Naive thymus-derived CD4-positive, alpha-beta T cell (primary cell): ENCODE measurements at regions of chrX and their contacts with region 1.

Region 1: GRCh38 chrX:136496770-136497598 is at the start of gene HTATSF1:
- DNase-seq: peak; percentile 72 to 92 (median 88)
- ATAC-seq: peak; percentile 89
- H3K4me3 ChIP-seq: peak within 1 kb of the TSS; percentile 69
- H3K4me3 Mint-ChIP-seq: peak within 1 kb of the TSS; percentile 84 to 97 (median 94)
- H3K27ac ChIP-seq: peak within 1 kb of the TSS; percentile 86
- H3K27ac Mint-ChIP-seq: peak within 1 kb of the TSS; percentile 93 to 99 (median 97)
- H3K4me1 ChIP-seq: peaks cover 7 to 10% of the 10 kb centered on the region in 2 donors
- H3K4me1 Mint-ChIP-seq: peaks cover 6 to 24% (median 17%) of the 10 kb centered on the region in 7 donors
- H3K27me3 ChIP-seq: no peaks in the 10 kb centered on the region
- H3K27me3 Mint-ChIP-seq: peaks cover 0 to 5% (median 0%) of the 10 kb centered on the region in 5 donors
- total RNA-seq, gene HTATSF1: 25.9 to 67.2 (median 29.0) TPM

Region 2: GRCh38 chrX:135421537-135421931 is 1075.5 kb before region 1 on chrX:
- CTCF ChIA-PET with region 1: no interaction called
- POLR2A ChIA-PET with region 1: no interaction called
- intact Hi-C with region 1: loop called in 1 of 2 experiments (anchors 2 kb)
- DNase-seq: peak; percentile 75 to 89 (median 83)
- ATAC-seq: peak; percentile 96
- H3K4me3 ChIP-seq: peak overlapping the region; percentile 37
- H3K4me3 Mint-ChIP-seq: peak overlapping the region; percentile 53 to 84 (median 72)
- H3K27ac ChIP-seq: no peak overlapping the region
- H3K27ac Mint-ChIP-seq: peak overlapping the region in 4 of 9 donors; percentile 12 to 68 (median 26)
- H3K4me1 ChIP-seq: no peaks in the 10 kb centered on the region
- H3K4me1 Mint-ChIP-seq: peaks cover 0 to 13% (median 6%) of the 10 kb centered on the region in 7 donors
- H3K27me3 ChIP-seq: no peaks in the 10 kb centered on the region
- H3K27me3 Mint-ChIP-seq: peaks cover 0 to 22% (median 0%) of the 10 kb centered on the region in 5 donors

Region 3: GRCh38 chrX:136039968-136040367 is 457.0 kb before region 1 on chrX:
- CTCF ChIA-PET with region 1: no interaction called
- POLR2A ChIA-PET with region 1: no interaction called
- intact Hi-C with region 1: no loop called
- DNase-seq: no peak
- ATAC-seq: no peak
- H3K4me3 ChIP-seq: no peak overlapping the region
- H3K4me3 Mint-ChIP-seq: no peak overlapping the region
- H3K27ac ChIP-seq: no peak overlapping the region
- H3K27ac Mint-ChIP-seq: peak overlapping the region in 1 of 9 donors; percentile 14
- H3K4me1 ChIP-seq: no peaks in the 10 kb centered on the region
- H3K4me1 Mint-ChIP-seq: no peaks in the 10 kb centered on the region
- H3K27me3 ChIP-seq: no peaks in the 10 kb centered on the region
- H3K27me3 Mint-ChIP-seq: no peaks in the 10 kb centered on the region

Region 4: DNA sequence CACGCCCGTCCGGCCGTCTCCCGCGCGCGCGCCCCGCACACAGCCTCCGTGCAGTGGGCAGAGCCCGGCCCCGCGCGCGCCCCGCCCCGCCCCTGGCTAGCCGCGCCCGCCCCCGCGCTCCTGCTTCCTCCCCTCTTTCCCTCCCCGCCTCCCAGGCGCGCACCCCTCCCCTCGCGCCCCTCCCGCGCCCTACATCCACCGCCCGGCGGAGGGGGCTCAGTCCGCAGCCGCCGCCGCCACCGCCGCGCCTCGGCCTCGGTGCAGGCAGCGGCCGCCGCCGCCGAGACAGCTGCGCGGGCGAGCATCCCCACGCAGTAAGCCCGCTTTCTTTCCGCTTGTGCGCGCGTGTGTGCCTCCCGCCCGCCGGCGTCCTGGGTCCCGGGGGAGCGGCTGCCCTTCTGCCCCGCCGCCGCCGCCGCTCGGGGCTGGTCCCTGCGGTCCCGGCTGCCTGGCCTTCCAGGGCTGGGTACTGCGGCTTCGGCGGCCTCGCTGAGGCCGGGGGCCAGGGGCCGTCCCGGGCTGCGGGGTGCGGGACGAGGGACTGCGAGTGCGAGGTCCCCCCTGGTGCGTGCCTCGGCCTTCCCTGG is 349.6 kb before region 1 on chrX and contains the start of gene FHL1:
- CTCF ChIA-PET with region 1: no interaction called
- POLR2A ChIA-PET with region 1: no interaction called
- intact Hi-C with region 1: loop called in 1 of 2 experiments (anchors 10 kb)
- DNase-seq: peak; percentile 12 to 59 (median 45)
- ATAC-seq: peak; percentile 86
- H3K4me3 ChIP-seq: peak within 1 kb of the TSS; percentile 55
- H3K4me3 Mint-ChIP-seq: peak within 1 kb of the TSS; percentile 82 to 94 (median 89)
- H3K27ac ChIP-seq: peak within 1 kb of the TSS; percentile 56
- H3K27ac Mint-ChIP-seq: peak within 1 kb of the TSS; percentile 73 to 97 (median 91)
- H3K4me1 ChIP-seq: peaks cover 0 to 17% of the 10 kb centered on the region in 2 donors
- H3K4me1 Mint-ChIP-seq: peaks cover 23 to 54% (median 41%) of the 10 kb centered on the region in 7 donors
- H3K27me3 ChIP-seq: no peaks in the 10 kb centered on the region
- H3K27me3 Mint-ChIP-seq: peaks cover 0 to 14% (median 0%) of the 10 kb centered on the region in 5 donors
- total RNA-seq, gene FHL1: 14.9 to 26.4 (median 22.4) TPM

Region 5: DNA sequence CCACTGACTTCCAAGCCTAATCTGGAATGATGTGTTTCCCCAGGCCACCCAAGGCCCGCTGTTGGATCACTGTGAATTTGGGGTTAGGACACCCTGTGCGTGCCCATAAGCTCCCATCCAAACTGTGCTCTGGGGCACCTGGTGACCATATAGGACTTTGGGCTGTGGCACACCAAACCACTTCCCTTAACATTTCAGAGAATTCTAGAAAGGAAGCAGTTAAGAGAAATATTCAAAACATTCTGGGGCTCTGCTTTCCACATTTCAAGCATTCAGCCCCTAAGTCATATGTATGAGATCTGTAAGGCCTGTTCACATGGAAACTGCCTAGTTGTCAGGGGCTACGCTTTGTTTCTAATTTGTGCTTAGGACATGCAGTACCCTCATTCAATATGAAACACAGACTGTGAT is 49.4 kb after region 1 on chrX:
- CTCF ChIA-PET with region 1: no interaction called
- POLR2A ChIA-PET with region 1: no interaction called
- intact Hi-C with region 1: loop called in 1 of 2 experiments (anchors 2 kb)
- DNase-seq: peak in 4 of 9 donors; percentile 3 to 20 (median 14)
- ATAC-seq: peak; percentile 14
- H3K4me3 ChIP-seq: no peak overlapping the region
- H3K4me3 Mint-ChIP-seq: peak overlapping the region in 5 of 10 donors; percentile 14 to 65 (median 36)
- H3K27ac ChIP-seq: peak overlapping the region; percentile 39
- H3K27ac Mint-ChIP-seq: peak overlapping the region; percentile 30 to 91 (median 79)
- H3K4me1 ChIP-seq: peaks cover 11 to 33% of the 10 kb centered on the region in 2 donors
- H3K4me1 Mint-ChIP-seq: peaks cover 7 to 51% (median 43%) of the 10 kb centered on the region in 7 donors
- H3K27me3 ChIP-seq: no peaks in the 10 kb centered on the region
- H3K27me3 Mint-ChIP-seq: no peaks in the 10 kb centered on the region

Region 6: DNA sequence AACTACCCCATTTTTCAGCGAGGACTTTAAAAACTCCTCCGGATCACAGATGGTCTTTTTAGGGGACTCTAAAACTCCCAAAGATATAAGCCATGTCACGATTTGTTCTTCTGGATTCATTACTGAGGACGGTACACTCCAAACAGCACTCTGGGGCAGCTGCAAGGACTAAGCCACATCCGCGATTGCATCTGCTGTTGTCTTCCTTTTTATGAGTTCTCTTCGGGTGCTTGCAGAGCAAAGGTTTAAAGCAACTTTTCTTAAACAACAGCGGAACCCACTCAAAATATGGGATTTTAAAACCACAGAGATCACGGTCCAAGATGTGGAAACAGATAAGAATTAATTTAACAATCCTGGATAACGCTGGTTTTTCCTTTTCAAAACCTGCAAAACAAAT is 283.8 kb after region 1 on chrX and contains the start of gene ARHGEF6:
- CTCF ChIA-PET with region 1: no interaction called
- POLR2A ChIA-PET with region 1: no interaction called
- intact Hi-C with region 1: loop called in 1 of 2 experiments (anchors 10 kb)
- DNase-seq: peak in 6 of 9 donors; percentile 28 to 52 (median 46)
- ATAC-seq: peak; percentile 72
- H3K4me3 ChIP-seq: peak within 1 kb of the TSS; percentile 77
- H3K4me3 Mint-ChIP-seq: peak within 1 kb of the TSS; percentile 85 to 96 (median 93)
- H3K27ac ChIP-seq: peak within 1 kb of the TSS; percentile 80
- H3K27ac Mint-ChIP-seq: peak within 1 kb of the TSS; percentile 84 to 97 (median 96)
- H3K4me1 ChIP-seq: peaks cover 7 to 29% of the 10 kb centered on the region in 2 donors
- H3K4me1 Mint-ChIP-seq: peaks cover 32 to 73% (median 64%) of the 10 kb centered on the region in 7 donors
- H3K27me3 ChIP-seq: no peaks in the 10 kb centered on the region
- H3K27me3 Mint-ChIP-seq: no peaks in the 10 kb centered on the region
- total RNA-seq, gene ARHGEF6: 66.1 to 102 (median 81.5) TPM

Region 7: DNA sequence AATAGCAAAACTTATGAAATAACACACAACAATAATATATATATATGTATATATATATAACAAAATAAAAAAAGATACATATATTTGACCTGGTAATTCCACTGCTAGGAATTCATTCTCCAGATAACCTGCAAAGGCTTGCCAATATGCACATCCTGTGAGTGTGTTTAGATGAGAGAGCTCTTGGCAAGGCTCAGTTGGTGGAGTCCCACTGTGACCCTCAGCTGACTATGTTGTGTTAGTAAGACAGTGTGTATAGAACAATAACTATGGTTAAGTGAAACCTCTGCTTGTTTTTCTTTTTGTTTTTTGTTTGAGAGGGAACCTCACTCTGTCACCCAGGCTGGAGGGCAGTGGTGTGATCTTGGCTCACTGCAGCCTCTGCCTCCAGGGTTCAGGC is 423.0 kb after region 1 on chrX:
- CTCF ChIA-PET with region 1: no interaction called
- POLR2A ChIA-PET with region 1: no interaction called
- intact Hi-C with region 1: loop called in 1 of 2 experiments (anchors 5 kb)
- DNase-seq: no peak
- ATAC-seq: no peak
- H3K4me3 ChIP-seq: no peak overlapping the region
- H3K4me3 Mint-ChIP-seq: no peak overlapping the region
- H3K27ac ChIP-seq: no peak overlapping the region
- H3K27ac Mint-ChIP-seq: no peak overlapping the region
- H3K4me1 ChIP-seq: no peaks in the 10 kb centered on the region
- H3K4me1 Mint-ChIP-seq: peaks cover 0 to 2% (median 2%) of the 10 kb centered on the region in 7 donors
- H3K27me3 ChIP-seq: no peaks in the 10 kb centered on the region
- H3K27me3 Mint-ChIP-seq: no peaks in the 10 kb centered on the region